Activated T-helper 1 cell treated with anti-CD3 and anti-CD28 coated beads, Interleukin-12 subunit alpha, Interleukin-12 subunit beta, Interleukin-2, Interleukin-4 antibody, amounts not matched to agents 30 ng/mL and 10 ng/mL and 1 ng/mL, durations not matched to agents 14 hours and 24 hours and 36 hours (primary cell): ENCODE measurements at regions of chr14 and their contacts with region 1.

Region 1: GRCh38 chr14:53126731-53127130 is 26.4 kb downstream of the DDHD1 start:
- DNase-seq: no peak
- H3K4me3 Mint-ChIP-seq: peak overlapping the region; percentile 41
- H3K27ac Mint-ChIP-seq: peak overlapping the region; percentile 72
- H3K4me1 Mint-ChIP-seq: peaks cover 30% of the 10 kb centered on the region
- H3K27me3 Mint-ChIP-seq: no peaks in the 10 kb centered on the region

Region 2: DNA sequence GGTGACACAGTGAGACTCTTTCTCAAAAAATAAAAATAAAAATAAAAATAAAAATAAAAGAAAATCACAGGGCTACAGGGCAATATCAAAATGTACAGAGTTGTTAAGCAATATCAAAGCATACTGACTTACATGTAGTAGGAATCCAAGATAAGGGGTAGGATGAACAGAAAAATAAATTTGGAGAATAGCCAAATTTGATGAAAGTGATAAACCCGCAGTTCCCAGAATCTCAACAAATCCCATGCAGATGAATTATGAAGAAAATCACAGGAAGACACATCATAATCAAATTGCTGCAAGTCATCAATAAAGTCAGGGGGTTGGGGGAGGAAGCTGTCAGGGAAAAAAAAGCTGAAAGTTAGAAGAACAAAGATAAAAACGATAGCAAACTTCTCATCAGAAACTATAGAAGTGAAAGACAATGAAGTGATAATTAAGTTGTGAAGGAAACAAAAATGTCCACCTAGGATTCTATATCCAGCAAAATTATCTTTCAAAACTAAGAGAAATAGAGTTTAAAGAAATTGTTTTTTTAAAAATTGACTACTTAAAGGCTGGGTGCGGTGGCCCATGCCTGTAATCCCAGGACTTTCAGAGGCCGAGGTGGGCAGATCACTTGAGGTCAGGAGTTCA is 11.0 kb after region 1 on chr14:
- intact Hi-C with region 1: loop called (anchors 2 kb)
- DNase-seq: no peak
- H3K4me3 Mint-ChIP-seq: no peak overlapping the region
- H3K27ac Mint-ChIP-seq: no peak overlapping the region
- H3K4me1 Mint-ChIP-seq: peaks cover 32% of the 10 kb centered on the region
- H3K27me3 Mint-ChIP-seq: no peaks in the 10 kb centered on the region

Region 3: DNA sequence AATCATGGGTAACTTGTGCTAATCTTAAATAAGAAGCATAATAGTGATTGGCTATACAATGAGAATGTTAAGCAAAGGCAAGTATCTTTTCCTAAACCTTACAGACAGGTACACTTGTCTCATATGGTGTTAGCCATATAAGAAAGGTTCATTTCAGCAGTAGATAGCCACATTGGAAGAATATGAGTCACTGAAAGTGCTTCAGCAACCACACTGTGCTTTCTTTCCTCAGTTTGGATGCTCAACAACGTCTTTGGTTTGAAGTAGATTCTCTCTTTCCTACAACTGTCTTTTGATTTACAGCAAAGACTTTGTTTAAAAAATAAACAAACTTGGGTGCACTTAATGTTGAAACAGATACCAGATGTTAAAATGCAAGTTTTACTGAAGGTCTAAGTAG is 17.5 kb after region 1 on chr14:
- intact Hi-C with region 1: loop called (anchors 2 kb)
- DNase-seq: no peak
- H3K4me3 Mint-ChIP-seq: peak overlapping the region; percentile 29
- H3K27ac Mint-ChIP-seq: peak overlapping the region; percentile 76
- H3K4me1 Mint-ChIP-seq: peaks cover 79% of the 10 kb centered on the region
- H3K27me3 Mint-ChIP-seq: no peaks in the 10 kb centered on the region